BJ (cell line): ENCODE measurements at regions of chr3 and their contacts with region 1.

Region 1: DNA sequence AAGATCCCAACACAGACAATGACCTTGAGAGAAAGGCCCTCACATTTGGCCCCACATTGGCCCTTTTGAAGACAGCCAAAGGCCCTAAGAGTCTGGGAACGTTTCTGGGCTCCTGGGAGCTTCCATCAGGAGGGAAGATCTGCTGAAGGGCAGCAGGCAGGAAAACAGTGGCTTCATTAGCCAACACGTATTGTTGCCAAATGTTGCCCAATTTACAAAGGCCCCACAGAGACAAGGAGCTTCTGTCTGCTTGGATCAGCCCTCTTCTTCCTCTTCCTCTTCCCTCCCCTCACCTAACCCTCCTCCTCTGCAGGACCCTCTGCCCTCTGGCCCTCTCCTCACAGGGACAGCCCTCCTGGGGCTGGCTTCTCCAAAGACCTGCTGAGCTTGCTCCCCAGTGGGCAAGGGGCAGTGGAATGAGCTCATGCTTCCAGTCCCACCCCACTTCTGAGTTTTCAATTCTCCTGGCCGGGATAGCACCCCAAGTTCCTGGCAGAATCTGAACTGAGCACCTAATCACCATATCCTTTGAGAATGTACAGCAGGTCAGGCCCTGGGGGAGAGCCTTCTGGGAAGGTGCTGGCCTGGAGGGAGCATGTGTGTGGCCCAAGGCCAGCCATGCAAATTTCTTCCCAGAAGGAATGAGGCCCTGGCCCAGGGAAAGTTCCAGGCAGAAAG is 5.1 kb upstream of the LTF start:
- DNase-seq: no peak
- H3K4me3 ChIP-seq: no peak overlapping the region
- H3K27me3 ChIP-seq: peaks cover 28% of the 10 kb centered on the region
- CTCF ChIP-seq: no peak

Region 2: DNA sequence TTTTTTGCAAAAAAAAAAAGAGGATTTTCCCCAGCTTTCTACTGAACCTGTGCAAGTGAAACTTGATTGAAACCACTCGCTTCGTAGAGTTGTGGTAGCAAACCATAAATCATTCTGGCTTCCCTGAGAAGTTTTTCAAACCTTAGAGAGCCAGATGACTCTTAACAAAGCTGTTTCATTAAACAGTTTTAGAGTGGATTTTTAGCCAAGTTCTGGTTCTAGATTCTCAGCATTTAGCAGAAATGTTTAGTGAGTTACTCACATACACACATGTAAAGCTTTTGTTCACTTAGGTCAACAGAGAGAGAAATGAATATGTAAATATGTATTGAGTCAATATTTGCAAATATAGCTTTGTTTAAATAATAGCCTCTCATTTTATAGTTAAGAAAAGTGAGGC is 601.6 kb before region 1 on chr3:
- CTCF ChIA-PET with region 1: no interaction called
- POLR2A ChIA-PET with region 1: no interaction called
- DNase-seq: no peak
- H3K4me3 ChIP-seq: no peak overlapping the region
- H3K27me3 ChIP-seq: peaks cover 14% of the 10 kb centered on the region
- CTCF ChIP-seq: no peak

Region 3: DNA sequence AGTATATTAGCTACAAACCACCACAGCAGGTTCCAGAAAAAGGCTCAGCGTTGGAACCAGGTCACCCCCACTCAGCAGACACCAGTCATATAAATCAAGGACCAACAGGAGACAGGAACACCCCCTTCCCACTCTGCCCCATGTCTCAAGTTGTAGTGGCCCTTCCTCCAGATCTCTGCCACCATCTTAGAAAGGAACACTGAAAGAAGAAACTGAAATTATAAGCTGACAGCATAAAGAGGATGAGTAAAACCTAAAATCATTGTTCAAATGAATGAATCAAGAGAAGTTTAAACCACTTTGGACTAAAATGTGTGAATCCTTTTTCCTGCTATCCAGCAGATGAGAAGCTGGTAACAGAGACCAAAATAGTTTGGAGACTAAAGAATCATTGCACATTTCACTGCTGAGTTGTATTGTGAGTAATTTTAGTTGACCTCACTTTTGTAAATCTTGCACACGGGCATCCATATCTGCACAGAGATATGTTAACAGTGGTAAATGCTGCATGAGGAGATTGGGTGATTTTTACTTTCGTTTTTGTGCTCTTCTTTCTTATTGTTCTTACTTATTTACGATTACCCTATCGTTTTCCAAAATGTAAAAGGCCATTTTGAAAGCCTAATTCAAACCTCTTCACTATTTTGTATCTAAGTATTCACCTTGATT is 207.8 kb before region 1 on chr3:
- CTCF ChIA-PET with region 1: no interaction called
- POLR2A ChIA-PET with region 1: no interaction called
- DNase-seq: no peak
- H3K4me3 ChIP-seq: no peak overlapping the region
- H3K27me3 ChIP-seq: no peaks in the 10 kb centered on the region
- CTCF ChIP-seq: no peak

Region 4: DNA sequence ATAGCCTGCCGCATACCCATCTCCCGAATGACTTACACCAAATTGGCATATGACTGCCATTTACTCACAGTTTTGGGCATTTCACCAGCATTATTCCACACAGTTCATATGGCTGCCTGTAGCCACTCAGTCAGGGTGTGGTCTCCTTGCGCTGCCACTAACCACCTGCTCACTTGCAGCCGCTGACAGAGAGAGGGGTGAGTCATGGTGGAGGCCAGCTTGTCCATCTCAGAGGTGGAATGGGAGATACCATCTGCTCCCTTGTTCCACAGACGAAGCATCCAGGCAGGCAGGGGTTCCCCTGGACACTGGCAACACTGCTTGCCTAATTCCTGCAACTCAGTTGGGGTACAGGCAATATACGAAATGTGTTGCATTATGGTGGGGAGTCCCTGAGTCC is 47.2 kb before region 1 on chr3:
- CTCF ChIA-PET with region 1: no interaction called
- POLR2A ChIA-PET with region 1: no interaction called
- DNase-seq: no peak
- H3K4me3 ChIP-seq: no peak overlapping the region
- H3K27me3 ChIP-seq: no peaks in the 10 kb centered on the region
- CTCF ChIP-seq: no peak

Region 5: GRCh38 chr3:46449755-46450552 is 19.9 kb before region 1 on chr3:
- CTCF ChIA-PET with region 1: interaction called, 12 read pairs
- POLR2A ChIA-PET with region 1: no interaction called
- DNase-seq: no peak
- H3K4me3 ChIP-seq: no peak overlapping the region
- H3K27me3 ChIP-seq: peaks cover 9% of the 10 kb centered on the region
- CTCF ChIP-seq: peak; percentile 59

Region 6: DNA sequence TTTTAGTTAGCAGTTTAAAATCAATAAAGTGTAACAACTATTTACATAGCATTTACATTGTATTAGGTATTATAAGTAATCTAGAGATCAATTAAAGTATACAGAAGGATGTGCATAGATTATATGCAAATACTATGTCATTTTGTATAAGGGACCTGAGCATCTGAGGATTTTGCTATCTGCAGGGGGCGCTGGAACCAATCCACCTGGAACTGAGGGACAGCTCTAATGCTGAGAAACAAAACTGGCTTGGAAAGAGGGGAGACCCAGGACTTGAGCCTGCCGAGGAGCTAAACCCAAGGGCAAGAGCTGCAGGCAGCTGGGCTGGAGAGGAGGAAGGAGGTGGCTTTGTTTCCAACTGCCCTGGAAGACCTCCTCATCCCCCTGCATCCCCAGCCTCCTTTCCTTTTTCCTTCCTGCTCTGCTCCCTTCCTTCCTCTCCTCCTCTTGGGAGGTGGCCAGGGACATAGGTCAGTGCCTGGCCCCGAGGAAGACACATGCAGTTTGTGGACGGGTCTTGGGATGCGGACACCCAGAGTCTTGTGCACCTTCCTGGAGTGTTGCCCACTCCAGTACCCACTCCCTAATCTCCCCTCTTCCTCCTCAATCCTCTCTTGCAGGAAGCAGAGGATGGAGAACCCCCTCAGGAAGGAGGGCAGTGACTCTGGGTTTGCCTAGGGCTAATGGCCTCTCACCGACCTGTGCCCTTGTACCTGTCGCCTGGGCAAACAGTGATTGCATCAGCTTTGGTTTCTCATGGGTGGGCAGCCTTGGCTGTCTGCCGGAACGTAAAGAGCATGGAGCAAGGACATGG is 27.1 kb after region 1 on chr3:
- CTCF ChIA-PET with region 1: no interaction called
- POLR2A ChIA-PET with region 1: no interaction called
- DNase-seq: no peak
- H3K4me3 ChIP-seq: no peak overlapping the region
- H3K27me3 ChIP-seq: no peaks in the 10 kb centered on the region
- CTCF ChIP-seq: peak; percentile 33; the same call in 1 of the 2 replicates